ENCODE measurements at regions of chr4 and their contacts with region 1.

Region 1: DNA sequence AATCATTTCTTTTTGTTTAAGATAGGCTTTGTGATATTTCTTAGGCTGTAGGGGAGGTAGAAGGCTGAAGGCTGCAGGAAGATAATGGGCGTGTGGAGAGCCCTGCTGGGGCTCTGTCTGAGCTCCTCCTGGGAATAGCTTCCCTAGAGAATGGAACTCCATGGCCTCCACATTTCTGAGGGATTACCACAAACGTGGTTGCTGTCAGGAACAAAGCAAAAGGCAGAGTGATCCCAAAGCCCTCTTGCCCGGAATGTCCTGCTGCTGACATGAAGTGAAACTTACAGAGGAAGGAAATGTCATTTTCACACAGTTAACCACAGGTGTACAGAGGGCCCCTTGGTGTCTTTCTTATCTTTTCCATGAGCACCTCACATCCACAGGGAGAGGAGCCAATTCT is 89.3 kb downstream of the DDIT4L start:
- DNase-seq: no peak
- H3K4me3 ChIP-seq: no peak overlapping the region
- H3K27ac ChIP-seq: no peak overlapping the region
- H3K4me1 ChIP-seq: no peaks in the 10 kb centered on the region
- H3K27me3 ChIP-seq: no peaks in the 10 kb centered on the region
- CTCF ChIP-seq: no peak
- POLR2A ChIP-seq: no peak

Region 2: GRCh38 chr4:101464607-101465006 is 1363.6 kb after region 1 on chr4:
- intact Hi-C with region 1: loop called (anchors 5 kb)
- DNase-seq: no peak
- H3K4me3 ChIP-seq: no peak overlapping the region
- H3K27ac ChIP-seq: no peak overlapping the region
- H3K4me1 ChIP-seq: no peaks in the 10 kb centered on the region
- H3K27me3 ChIP-seq: no peaks in the 10 kb centered on the region
- CTCF ChIP-seq: no peak
- POLR2A ChIP-seq: no peak

Measured in breast epithelium (tissue), 4 donors.